B cell (primary cell): ENCODE measurements at regions of chr4 and their contacts with region 1.

Region 1: DNA sequence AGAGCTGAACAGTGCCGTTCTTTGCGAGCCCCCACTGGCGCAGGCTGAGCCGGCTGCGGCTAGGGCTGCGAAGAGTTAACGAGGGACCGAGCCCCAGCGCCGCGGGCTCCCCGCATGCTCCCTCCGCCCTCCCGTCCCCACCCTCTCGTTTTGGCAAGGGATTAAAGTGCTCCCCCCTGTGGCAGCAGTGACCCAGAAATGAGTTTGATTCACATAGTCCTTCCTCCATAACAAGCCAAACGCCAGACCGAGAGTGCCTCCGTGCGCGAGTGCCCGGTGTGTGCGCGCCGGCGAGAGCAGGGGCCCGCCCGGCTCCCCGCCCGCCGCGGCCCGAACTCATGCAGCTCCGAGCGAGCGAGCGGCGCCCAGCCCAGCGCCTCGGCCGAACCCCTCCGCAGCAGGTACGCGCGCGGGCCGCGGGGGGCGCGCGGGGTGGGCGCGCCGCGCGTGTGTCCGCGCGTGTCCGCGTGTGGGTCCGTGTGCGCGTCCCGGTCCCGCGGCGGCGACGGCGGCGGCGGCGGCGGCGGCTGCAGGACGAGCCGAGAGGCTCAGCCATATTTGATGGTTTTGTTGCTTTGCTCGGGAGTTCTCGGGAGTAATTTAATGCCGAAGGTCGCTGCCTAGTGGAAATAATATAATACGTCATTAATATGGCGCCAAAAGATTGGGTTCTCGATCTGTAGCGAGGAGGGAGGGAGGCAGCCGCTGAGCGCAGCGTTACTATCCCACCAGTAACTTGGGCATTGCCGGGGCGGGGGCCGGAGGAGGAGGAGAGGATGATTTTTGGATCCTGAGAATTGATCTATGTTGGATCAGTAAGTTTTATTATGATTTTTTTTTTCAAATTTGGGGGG is at the start of gene JADE1:
- DNase-seq: peak; percentile 95
- ATAC-seq: peak; percentile 61
- H3K4me3 ChIP-seq: peak within 1 kb of the TSS; percentile 72 to 95 (median 78)
- H3K4me3 Mint-ChIP-seq: peak within 1 kb of the TSS; percentile 96
- H3K27ac ChIP-seq: peak within 1 kb of the TSS; percentile 74 to 89
- H3K27ac Mint-ChIP-seq: peak within 1 kb of the TSS; percentile 98
- H3K4me1 ChIP-seq: peaks cover 7 to 16% of the 10 kb centered on the region in 2 donors
- H3K4me1 Mint-ChIP-seq: peaks cover 11% of the 10 kb centered on the region
- H3K27me3 ChIP-seq: no peaks in the 10 kb centered on the region
- H3K27me3 Mint-ChIP-seq: no peaks in the 10 kb centered on the region
- CTCF ChIP-seq: peak; percentile 66
- total RNA-seq, gene JADE1: 42.4 and 45.4 TPM in 2 replicates

Region 2: DNA sequence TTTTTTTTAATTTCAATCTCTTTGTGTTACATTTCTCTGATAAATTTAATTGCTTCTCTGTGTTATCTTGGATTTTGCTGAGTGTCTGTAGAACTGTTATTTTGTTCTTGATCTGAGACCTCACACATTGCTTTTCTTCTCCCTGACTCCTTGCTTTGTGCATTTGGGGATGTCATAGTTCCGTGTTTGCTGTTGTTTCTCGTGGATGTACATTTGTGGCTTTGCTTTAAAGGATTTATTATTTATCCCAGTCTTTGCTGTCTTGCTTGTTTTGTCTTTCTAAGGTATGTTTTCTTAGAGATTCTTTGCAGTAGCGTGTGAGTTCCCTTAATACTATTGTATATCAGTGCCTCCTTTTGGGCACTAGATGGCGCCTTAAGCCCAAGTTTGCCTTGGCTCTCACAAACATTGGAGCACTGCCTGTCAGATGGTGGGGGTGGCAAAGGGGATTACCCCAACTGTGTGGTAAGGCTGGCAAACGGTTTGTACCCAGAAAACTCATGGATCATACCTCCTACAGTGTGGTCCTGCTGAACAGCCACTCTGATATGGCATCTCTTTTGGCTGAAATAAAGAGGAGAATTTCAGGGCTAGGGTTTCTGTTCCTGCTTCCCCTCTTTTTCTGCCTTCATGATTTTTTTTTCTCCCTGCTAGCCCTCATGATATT is 618.5 kb before region 1 on chr4:
- CTCF ChIA-PET with region 1: no interaction called
- POLR2A ChIA-PET with region 1: no interaction called
- intact Hi-C with region 1: loop called (anchors 1 kb)
- DNase-seq: peak; percentile 81
- ATAC-seq: peak; percentile 97
- H3K4me3 ChIP-seq: no peak overlapping the region
- H3K4me3 Mint-ChIP-seq: no peak overlapping the region
- H3K27ac ChIP-seq: no peak overlapping the region
- H3K27ac Mint-ChIP-seq: no peak overlapping the region
- H3K4me1 ChIP-seq: no peaks in the 10 kb centered on the region
- H3K4me1 Mint-ChIP-seq: no peaks in the 10 kb centered on the region
- H3K27me3 ChIP-seq: no peaks in the 10 kb centered on the region
- H3K27me3 Mint-ChIP-seq: no peaks in the 10 kb centered on the region
- CTCF ChIP-seq: peak; percentile 94

Region 3: GRCh38 chr4:128574706-128575105 is 235.0 kb before region 1 on chr4:
- CTCF ChIA-PET with region 1: no interaction called
- POLR2A ChIA-PET with region 1: interaction called, 8 read pairs
- intact Hi-C with region 1: loop called (anchors 1 kb)
- DNase-seq: peak; percentile 67
- ATAC-seq: no peak
- H3K4me3 ChIP-seq: no peak overlapping the region
- H3K4me3 Mint-ChIP-seq: no peak overlapping the region
- H3K27ac ChIP-seq: no peak overlapping the region
- H3K27ac Mint-ChIP-seq: no peak overlapping the region
- H3K4me1 ChIP-seq: no peaks in the 10 kb centered on the region
- H3K4me1 Mint-ChIP-seq: no peaks in the 10 kb centered on the region
- H3K27me3 ChIP-seq: no peaks in the 10 kb centered on the region
- H3K27me3 Mint-ChIP-seq: peaks cover 14% of the 10 kb centered on the region
- CTCF ChIP-seq: peak; percentile 70

Region 4: DNA sequence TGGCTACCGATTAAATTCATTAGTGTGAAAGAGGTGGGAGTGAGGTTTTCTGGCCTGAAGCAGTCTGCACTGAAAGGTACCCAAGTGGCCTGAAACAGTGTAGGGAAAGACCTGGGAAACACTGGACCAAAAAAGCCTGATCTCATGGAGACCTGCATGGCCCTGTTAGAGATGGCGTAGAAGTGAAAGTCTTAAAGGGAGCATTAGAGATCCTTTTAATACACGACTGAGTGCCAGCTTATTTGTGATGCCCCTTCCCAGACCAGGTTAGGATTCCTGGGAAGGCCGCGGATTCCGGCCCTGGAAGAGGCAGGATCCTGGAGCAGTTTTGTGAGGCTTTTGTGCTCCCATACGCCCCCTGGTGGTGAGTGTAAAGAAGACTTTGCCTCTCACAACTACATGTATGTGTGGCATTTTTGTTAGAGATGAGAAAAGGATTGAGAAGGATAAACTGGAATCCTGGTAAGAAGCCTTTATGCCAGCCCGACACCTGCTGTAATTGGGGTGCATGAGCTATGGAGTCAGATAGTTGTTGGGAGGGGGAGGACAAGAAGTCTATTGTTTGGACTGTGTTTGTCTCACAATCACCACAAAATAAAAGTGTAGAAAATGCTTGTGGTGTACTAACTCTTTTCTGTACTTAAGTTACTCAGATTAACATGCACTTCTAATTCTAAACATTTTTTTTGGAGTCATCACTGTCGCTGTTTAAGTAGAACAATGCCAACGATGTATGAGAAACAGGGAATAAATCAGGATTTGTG is 53.8 kb after region 1 on chr4:
- CTCF ChIA-PET with region 1: interaction called, 13 read pairs
- POLR2A ChIA-PET with region 1: no interaction called
- intact Hi-C with region 1: loop called (anchors 1 kb)
- DNase-seq: peak; percentile 75
- ATAC-seq: peak; percentile 45
- H3K4me3 ChIP-seq: no peak overlapping the region
- H3K4me3 Mint-ChIP-seq: no peak overlapping the region
- H3K27ac ChIP-seq: no peak overlapping the region
- H3K27ac Mint-ChIP-seq: no peak overlapping the region
- H3K4me1 ChIP-seq: peaks cover 5 to 19% of the 10 kb centered on the region in 2 donors
- H3K4me1 Mint-ChIP-seq: peaks cover 35% of the 10 kb centered on the region
- H3K27me3 ChIP-seq: no peaks in the 10 kb centered on the region
- H3K27me3 Mint-ChIP-seq: no peaks in the 10 kb centered on the region
- CTCF ChIP-seq: peak; percentile 90

Region 5: GRCh38 chr4:129077326-129077725 is 267.6 kb after region 1 on chr4:
- CTCF ChIA-PET with region 1: no interaction called
- POLR2A ChIA-PET with region 1: no interaction called
- intact Hi-C with region 1: no loop called
- DNase-seq: no peak
- ATAC-seq: no peak
- H3K4me3 ChIP-seq: no peak overlapping the region
- H3K4me3 Mint-ChIP-seq: no peak overlapping the region
- H3K27ac ChIP-seq: no peak overlapping the region
- H3K27ac Mint-ChIP-seq: no peak overlapping the region
- H3K4me1 ChIP-seq: no peaks in the 10 kb centered on the region
- H3K4me1 Mint-ChIP-seq: no peaks in the 10 kb centered on the region
- H3K27me3 ChIP-seq: no peaks in the 10 kb centered on the region
- H3K27me3 Mint-ChIP-seq: no peaks in the 10 kb centered on the region
- CTCF ChIP-seq: no peak

Region 6: GRCh38 chr4:129254098-129254497 is 444.4 kb after region 1 on chr4:
- CTCF ChIA-PET with region 1: no interaction called
- POLR2A ChIA-PET with region 1: no interaction called
- intact Hi-C with region 1: no loop called
- DNase-seq: no peak
- ATAC-seq: no peak
- H3K4me3 ChIP-seq: no peak overlapping the region
- H3K4me3 Mint-ChIP-seq: no peak overlapping the region
- H3K27ac ChIP-seq: no peak overlapping the region
- H3K27ac Mint-ChIP-seq: no peak overlapping the region
- H3K4me1 ChIP-seq: no peaks in the 10 kb centered on the region
- H3K4me1 Mint-ChIP-seq: no peaks in the 10 kb centered on the region
- H3K27me3 ChIP-seq: peaks cover 0 to 5% (median 0%) of the 10 kb centered on the region in 4 experiments
- H3K27me3 Mint-ChIP-seq: peaks cover 10% of the 10 kb centered on the region
- CTCF ChIP-seq: no peak